CD8-positive, alpha-beta memory T cell (primary cell): ENCODE measurements at regions of chr12 and their contacts with region 1.

Region 1: GRCh38 chr12:9750276-9751203 is 10.2 kb downstream of the CD69 start:
- DNase-seq: peak; percentile 26 to 75 (median 65)
- H3K4me3 ChIP-seq: no peak overlapping the region
- H3K4me3 Mint-ChIP-seq: peak overlapping the region; percentile 28 to 74 (median 66)
- H3K27ac ChIP-seq: no peak overlapping the region
- H3K27ac Mint-ChIP-seq: peak overlapping the region in 6 of 8 donors; percentile 11 to 88 (median 58)
- H3K4me1 ChIP-seq: peaks cover 49% of the 10 kb centered on the region
- H3K4me1 Mint-ChIP-seq: peaks cover 47 to 54% (median 54%) of the 10 kb centered on the region in 3 donors
- H3K27me3 ChIP-seq: no peaks in the 10 kb centered on the region
- H3K27me3 Mint-ChIP-seq: peaks cover 0 to 2% of the 10 kb centered on the region in 2 donors

Region 2: GRCh38 chr12:9773216-9773877 is 22.8 kb after region 1 on chr12:
- CTCF ChIA-PET with region 1: interaction called, 48 read pairs
- POLR2A ChIA-PET with region 1: interaction called, 3 read pairs
- DNase-seq: peak in 2 of 5 donors; percentile 33 to 42
- H3K4me3 ChIP-seq: no peak overlapping the region
- H3K4me3 Mint-ChIP-seq: peak overlapping the region; percentile 24 to 75 (median 66)
- H3K27ac ChIP-seq: no peak overlapping the region
- H3K27ac Mint-ChIP-seq: peak overlapping the region in 7 of 8 donors; percentile 46 to 94 (median 76)
- H3K4me1 ChIP-seq: peaks cover 45% of the 10 kb centered on the region
- H3K4me1 Mint-ChIP-seq: peaks cover 79 to 90% (median 90%) of the 10 kb centered on the region in 3 donors
- H3K27me3 ChIP-seq: no peaks in the 10 kb centered on the region
- H3K27me3 Mint-ChIP-seq: no peaks in the 10 kb centered on the region

Region 3: DNA sequence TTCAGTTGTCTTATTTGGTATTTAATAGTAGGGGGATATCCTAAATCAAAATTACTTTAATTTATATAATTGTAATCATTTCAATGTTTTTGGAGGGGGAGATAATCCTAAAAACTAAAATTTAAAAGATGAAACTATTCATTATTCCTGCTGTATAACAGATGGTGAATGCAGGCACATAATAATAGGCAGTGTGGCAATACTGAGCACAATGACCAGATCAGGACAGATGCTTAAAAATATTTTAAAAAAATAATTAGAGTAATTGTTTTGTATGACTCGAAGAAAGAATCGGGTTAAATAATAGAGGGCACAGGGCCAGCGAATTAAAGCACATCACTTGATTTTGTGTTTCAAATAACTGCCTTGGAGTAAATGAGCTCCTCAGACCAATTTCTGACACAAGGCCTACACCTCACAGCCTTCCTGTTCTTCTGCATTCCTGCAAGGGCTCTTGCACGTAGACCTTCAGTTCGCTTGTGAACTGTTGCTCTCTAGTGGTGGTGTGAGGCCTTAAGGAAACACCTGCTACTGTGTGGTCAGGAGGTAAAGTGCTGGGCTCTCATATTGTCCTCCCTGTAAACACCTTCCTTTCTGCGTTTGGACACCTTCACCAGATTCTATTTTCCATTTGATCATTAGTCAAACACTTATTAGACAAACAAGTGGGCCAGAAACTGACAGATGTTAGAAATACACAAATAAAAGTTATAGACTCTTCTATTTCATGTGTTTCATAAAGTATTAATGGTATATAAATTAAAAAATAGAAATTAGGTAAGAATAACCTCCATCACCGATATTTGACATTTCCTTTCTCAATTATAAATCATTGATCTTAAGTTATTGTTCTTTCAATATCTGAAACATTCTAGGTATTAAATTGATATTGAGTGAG is 47.4 kb after region 1 on chr12:
- CTCF ChIA-PET with region 1: interaction called, 359 read pairs
- POLR2A ChIA-PET with region 1: interaction called, 12 read pairs
- DNase-seq: peak; percentile 26 to 83 (median 71)
- H3K4me3 ChIP-seq: no peak overlapping the region
- H3K4me3 Mint-ChIP-seq: peak overlapping the region in 4 of 7 donors; percentile 11 to 38 (median 25)
- H3K27ac ChIP-seq: no peak overlapping the region
- H3K27ac Mint-ChIP-seq: peak overlapping the region in 6 of 8 donors; percentile 1 to 96 (median 76)
- H3K4me1 ChIP-seq: peaks cover 52% of the 10 kb centered on the region
- H3K4me1 Mint-ChIP-seq: peaks cover 48 to 54% (median 48%) of the 10 kb centered on the region in 3 donors
- H3K27me3 ChIP-seq: no peaks in the 10 kb centered on the region
- H3K27me3 Mint-ChIP-seq: no peaks in the 10 kb centered on the region

Region 4: DNA sequence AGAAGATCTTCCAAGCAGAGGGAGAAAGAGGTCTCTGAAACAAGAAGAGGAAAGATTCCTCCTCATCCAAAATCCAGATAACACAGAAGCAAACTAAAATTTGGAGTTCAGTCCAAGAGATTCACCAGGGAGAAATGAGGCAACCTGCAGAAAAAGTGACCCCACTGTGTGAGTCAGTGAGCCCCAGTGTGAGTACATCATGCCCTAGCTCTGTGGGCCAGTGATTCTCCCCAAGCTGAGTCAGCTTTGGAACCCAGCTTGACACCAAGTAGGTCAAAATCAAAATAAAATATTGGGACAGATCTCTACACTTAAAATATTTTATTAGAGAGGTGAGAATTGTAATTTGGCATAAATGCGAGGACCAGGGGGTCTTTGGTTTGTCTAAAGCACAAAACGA is 101.4 kb after region 1 on chr12:
- CTCF ChIA-PET with region 1: no interaction called
- POLR2A ChIA-PET with region 1: no interaction called
- DNase-seq: no peak
- H3K4me3 ChIP-seq: no peak overlapping the region
- H3K4me3 Mint-ChIP-seq: no peak overlapping the region
- H3K27ac ChIP-seq: no peak overlapping the region
- H3K27ac Mint-ChIP-seq: peak overlapping the region in 2 of 8 donors; percentile 14 to 71
- H3K4me1 ChIP-seq: peaks cover 10% of the 10 kb centered on the region
- H3K4me1 Mint-ChIP-seq: peaks cover 35 to 45% (median 36%) of the 10 kb centered on the region in 3 donors
- H3K27me3 ChIP-seq: no peaks in the 10 kb centered on the region
- H3K27me3 Mint-ChIP-seq: no peaks in the 10 kb centered on the region

Region 5: DNA sequence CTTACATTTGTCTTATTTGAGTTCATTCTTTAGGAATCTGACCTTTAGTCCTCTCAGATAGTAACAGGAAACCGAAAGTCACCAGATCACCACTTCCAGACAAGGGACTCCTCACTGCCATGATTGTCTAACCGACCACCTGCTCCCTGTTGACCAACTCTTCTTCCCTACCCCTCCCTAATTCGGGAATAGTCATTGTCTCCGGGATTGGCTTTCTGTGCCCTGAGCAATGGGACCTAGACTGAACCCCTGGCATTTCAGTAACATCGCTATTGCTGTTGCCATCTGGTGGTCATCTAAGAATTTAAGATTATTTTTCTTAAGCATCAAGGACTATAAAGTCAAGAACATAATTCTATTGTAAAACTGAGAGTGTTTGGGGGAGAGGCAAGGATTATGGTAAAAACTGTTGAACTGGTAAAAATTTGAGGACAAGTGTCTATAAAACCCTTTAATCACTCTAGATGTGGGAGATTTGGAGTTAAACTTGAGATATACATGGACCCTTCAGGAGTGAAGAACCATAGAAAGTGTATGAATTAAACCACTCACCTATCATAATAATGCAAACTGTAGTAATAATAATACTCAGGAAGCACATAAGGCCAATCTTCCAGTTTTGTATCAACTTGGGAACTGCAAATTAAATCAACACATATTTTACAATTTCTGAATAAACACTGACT is 175.3 kb after region 1 on chr12:
- CTCF ChIA-PET with region 1: interaction called, 12 read pairs
- POLR2A ChIA-PET with region 1: no interaction called
- DNase-seq: peak in 2 of 5 donors; percentile 32 to 53
- H3K4me3 ChIP-seq: peak overlapping the region; percentile 19
- H3K4me3 Mint-ChIP-seq: peak overlapping the region in 6 of 7 donors; percentile 62 to 91 (median 78)
- H3K27ac ChIP-seq: no peak overlapping the region
- H3K27ac Mint-ChIP-seq: peak overlapping the region in 3 of 8 donors; percentile 0 to 75 (median 38)
- H3K4me1 ChIP-seq: no peaks in the 10 kb centered on the region
- H3K4me1 Mint-ChIP-seq: peaks cover 9 to 11% (median 10%) of the 10 kb centered on the region in 3 donors
- H3K27me3 ChIP-seq: no peaks in the 10 kb centered on the region
- H3K27me3 Mint-ChIP-seq: peaks cover 0 to 6% of the 10 kb centered on the region in 2 donors